Activated B cell treated with CpG ODN at 0.5 μM for 24 hours (primary cell): ENCODE measurements at regions of chr11 and their contacts with region 1.

Region 1: GRCh38 chr11:65859200-65859811 is 927 bp upstream of the MUS81 start:
- DNase-seq: peak; percentile 90
- ATAC-seq: peak; percentile 64
- H3K4me3 Mint-ChIP-seq: peak overlapping the region; percentile 99
- H3K27ac Mint-ChIP-seq: peak overlapping the region; percentile 98
- H3K4me1 Mint-ChIP-seq: peaks cover 53% of the 10 kb centered on the region
- H3K27me3 Mint-ChIP-seq: no peaks in the 10 kb centered on the region
- CTCF ChIP-seq: no peak

Region 2: GRCh38 chr11:65615229-65615941 is 243.9 kb before region 1 on chr11 and contains the start of gene PCNX3:
- CTCF ChIA-PET with region 1: interaction called, 5 read pairs
- POLR2A ChIA-PET with region 1: interaction called, 50 read pairs
- intact Hi-C with region 1: loop called (anchors 1 kb)
- DNase-seq: peak; percentile 96
- ATAC-seq: peak; percentile 90
- H3K4me3 Mint-ChIP-seq: peak within 1 kb of the TSS; percentile 97
- H3K27ac Mint-ChIP-seq: peak within 1 kb of the TSS; percentile 96
- H3K4me1 Mint-ChIP-seq: peaks cover 58% of the 10 kb centered on the region
- H3K27me3 Mint-ChIP-seq: no peaks in the 10 kb centered on the region
- CTCF ChIP-seq: no peak
- total RNA-seq, gene PCNX3: 45.3 and 51.4 TPM in 2 replicates

Region 3: DNA sequence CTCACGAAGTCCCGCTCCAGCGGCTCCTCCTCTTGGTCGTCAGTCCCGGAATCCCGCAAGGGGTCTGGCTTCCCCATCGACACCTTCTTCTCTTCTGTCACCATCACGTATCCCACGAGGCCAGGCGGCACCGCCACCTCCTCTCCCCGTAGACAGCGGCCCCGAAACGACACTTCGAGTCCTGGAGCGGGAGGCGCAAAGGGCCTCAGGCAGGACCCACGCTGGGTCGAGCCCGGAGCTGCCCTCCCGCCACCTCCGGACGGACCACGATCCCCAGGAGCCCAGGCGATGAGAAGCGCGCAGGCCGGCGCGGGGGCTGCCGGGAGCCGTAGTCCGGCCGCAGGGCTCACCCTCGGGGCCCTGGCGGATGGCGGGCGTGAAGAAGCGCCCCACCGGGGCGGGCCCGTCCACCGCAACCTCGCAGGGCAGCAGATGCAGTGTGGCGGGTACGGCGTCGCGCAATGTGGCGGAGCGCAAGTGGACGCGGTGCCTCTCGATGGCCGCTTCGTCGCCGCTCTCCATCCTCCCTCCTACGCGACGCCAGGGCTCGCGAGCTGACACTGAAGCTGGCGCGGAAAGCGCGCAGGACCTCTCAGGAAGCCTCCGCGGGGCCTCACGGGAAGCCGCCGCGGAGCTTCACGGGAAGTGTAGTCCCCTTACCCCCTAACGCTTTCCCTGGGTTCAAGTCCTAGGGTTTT is 138.9 kb before region 1 on chr11 and contains the start of gene RNASEH2C:
- CTCF ChIA-PET with region 1: no interaction called
- POLR2A ChIA-PET with region 1: interaction called, 12 read pairs
- intact Hi-C with region 1: no loop called
- DNase-seq: peak; percentile 75
- ATAC-seq: peak; percentile 92
- H3K4me3 Mint-ChIP-seq: peak within 1 kb of the TSS; percentile 94
- H3K27ac Mint-ChIP-seq: peak within 1 kb of the TSS; percentile 83
- H3K4me1 Mint-ChIP-seq: peaks cover 29% of the 10 kb centered on the region
- H3K27me3 Mint-ChIP-seq: no peaks in the 10 kb centered on the region
- CTCF ChIP-seq: no peak
- total RNA-seq, gene RNASEH2C: 85.3 and 91.4 TPM in 2 replicates

Region 4: DNA sequence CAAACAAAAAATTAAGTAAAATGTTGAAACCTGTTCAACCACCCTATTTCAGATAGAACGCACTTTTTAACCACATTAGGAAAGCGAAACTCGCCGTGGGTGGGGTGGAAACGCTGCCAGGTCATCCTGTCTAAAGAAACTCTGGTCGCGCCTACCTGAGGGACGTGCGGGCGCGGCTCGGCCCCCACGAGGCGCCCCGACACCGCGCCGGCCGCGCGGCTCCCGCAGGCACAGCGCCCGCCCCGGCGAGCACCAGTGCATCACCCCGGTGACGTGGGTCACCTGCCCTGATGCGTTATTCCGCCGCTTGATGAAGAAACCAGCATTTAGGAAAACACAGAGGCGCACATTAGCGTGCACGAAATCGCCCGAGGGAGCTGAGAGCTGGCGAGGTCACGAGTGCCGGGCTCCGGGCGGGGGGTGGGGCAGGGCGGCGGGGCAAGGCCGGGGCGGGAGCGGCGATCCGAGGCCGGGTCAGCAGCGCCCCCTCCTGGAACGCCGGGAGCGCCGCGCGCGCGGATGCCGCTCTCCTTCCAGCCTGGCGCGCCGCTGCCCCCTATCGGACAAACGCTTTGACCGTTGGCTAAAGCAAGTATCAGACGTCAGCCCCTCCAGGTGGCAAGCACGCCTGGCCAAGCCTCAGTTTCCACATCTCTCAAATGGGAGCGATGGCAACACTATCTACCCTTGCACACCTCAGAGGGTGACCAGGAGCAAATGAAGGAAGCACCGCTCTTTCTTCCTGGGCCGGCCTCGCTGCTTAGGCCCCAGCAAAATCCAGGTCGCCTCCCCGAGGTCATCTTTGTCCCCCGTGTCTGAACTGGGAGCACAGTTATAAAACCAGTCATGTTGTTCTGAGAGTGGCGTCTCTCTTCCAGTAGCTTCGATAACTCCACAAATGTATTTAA is 41.2 kb before region 1 on chr11:
- CTCF ChIA-PET with region 1: no interaction called
- POLR2A ChIA-PET with region 1: no interaction called
- intact Hi-C with region 1: no loop called
- DNase-seq: peak; percentile 95
- ATAC-seq: peak; percentile 95
- H3K4me3 Mint-ChIP-seq: peak overlapping the region; percentile 77
- H3K27ac Mint-ChIP-seq: peak overlapping the region; percentile 63
- H3K4me1 Mint-ChIP-seq: peaks cover 14% of the 10 kb centered on the region
- H3K27me3 Mint-ChIP-seq: no peaks in the 10 kb centered on the region
- CTCF ChIP-seq: peak; percentile 96

Region 5: DNA sequence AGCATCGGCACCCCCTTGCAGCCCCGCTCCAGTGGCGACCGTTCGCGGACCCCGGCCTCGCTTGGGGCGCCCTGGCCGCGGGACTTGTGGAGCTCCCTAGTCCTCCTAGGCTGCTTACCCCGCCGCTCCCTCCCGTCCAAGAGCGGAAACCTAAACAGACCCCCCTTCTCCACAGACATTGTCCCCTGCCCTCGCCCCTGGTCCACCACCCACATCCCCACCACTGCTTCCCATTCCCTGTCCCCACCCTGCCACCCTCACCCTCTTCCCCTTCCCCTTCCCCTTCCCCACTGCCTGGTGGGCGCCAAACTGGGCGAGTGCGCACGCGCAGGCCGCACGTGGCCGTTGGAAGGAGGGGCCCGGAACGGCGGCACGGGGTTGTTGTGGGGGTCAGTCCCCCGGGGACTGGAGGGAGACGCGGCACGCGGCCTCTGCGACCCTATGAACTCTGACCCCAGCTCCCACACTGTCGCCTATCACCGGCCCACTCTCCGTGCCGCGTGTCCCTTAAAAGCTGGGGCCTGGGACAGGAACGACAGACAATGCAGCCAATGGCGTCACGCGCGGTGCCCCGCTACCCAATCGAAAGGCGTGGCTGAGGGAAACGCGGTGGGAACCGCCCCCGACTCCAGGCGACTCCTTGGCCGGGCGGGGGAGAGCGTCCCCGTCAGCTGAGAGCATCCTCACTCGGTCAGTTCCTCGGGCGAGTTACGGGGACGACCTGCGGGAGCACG is 25.8 kb before region 1 on chr11 and contains the start of gene SNX32:
- CTCF ChIA-PET with region 1: interaction called, 10 read pairs
- POLR2A ChIA-PET with region 1: interaction called, 46 read pairs
- intact Hi-C with region 1: loop called (anchors 1 kb)
- DNase-seq: peak; percentile 92
- ATAC-seq: peak; percentile 99
- H3K4me3 Mint-ChIP-seq: no peak within 1 kb of the TSS
- H3K27ac Mint-ChIP-seq: no peak within 1 kb of the TSS
- H3K4me1 Mint-ChIP-seq: peaks cover 8% of the 10 kb centered on the region
- H3K27me3 Mint-ChIP-seq: no peaks in the 10 kb centered on the region
- CTCF ChIP-seq: no peak
- total RNA-seq, gene SNX32: 0.37 and 1.0 TPM in 2 replicates

Region 6: DNA sequence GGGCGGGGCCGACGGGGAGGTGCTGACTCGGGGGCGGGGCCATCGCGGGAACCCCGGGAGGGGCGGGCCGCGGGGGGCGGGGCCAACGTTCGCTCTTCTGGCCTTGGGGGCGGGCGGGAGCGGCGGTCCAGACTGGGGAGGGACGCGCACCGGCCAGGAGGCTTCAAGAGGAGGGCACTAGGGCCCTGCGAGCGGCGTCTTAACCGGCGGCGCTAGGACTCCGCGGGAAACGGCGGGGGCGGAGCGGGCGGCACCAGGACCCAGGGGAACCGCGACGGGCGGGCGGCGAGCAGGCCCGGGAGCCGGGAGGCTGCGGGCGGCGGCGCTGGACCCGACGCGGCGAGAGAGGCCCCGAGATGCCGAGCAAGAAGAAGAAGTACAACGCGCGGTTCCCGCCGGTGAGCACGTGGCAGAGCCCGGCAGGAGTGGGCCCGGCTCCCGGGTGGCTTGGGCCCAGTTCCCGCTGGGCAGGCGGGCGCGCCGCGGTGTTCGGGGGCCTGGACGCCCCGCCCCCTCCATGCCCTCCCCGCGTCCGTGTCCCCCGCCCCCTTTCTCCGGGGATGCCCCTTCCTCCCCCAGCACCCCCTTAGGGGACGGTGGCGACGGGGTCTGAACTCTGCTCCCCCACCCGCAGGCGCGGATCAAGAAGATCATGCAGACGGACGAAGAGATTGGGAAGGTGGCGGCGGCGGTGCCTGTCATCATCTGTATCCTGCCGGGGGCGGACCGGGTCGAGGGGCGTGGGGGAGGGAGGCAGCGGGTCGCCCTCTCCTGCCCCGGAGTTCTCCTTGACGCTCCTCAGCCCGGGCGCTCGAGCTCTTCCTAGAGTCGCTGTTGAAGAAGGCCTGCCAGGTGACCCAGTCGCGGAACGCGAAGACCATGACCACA is 60.1 kb after region 1 on chr11 and contains the start of gene DRAP1:
- CTCF ChIA-PET with region 1: no interaction called
- POLR2A ChIA-PET with region 1: interaction called, 13 read pairs
- intact Hi-C with region 1: loop called (anchors 1 kb)
- DNase-seq: peak; percentile 95
- ATAC-seq: peak; percentile 87
- H3K4me3 Mint-ChIP-seq: peak within 1 kb of the TSS; percentile 93
- H3K27ac Mint-ChIP-seq: peak within 1 kb of the TSS; percentile 81
- H3K4me1 Mint-ChIP-seq: peaks cover 53% of the 10 kb centered on the region
- H3K27me3 Mint-ChIP-seq: no peaks in the 10 kb centered on the region
- CTCF ChIP-seq: no peak
- total RNA-seq, gene DRAP1: 64.7 and 75.8 TPM in 2 replicates

Region 7: GRCh38 chr11:65988791-65989592 is 129.7 kb after region 1 on chr11:
- CTCF ChIA-PET with region 1: interaction called, 4 read pairs
- POLR2A ChIA-PET with region 1: interaction called, 3 read pairs
- intact Hi-C with region 1: loop called (anchors 1 kb)
- DNase-seq: peak; percentile 67
- ATAC-seq: peak; percentile 99
- H3K4me3 Mint-ChIP-seq: no peak overlapping the region
- H3K27ac Mint-ChIP-seq: peak overlapping the region; percentile 62
- H3K4me1 Mint-ChIP-seq: peaks cover 5% of the 10 kb centered on the region
- H3K27me3 Mint-ChIP-seq: no peaks in the 10 kb centered on the region
- CTCF ChIP-seq: peak; percentile 75

Region 8: GRCh38 chr11:66268283-66268951 is 409.1 kb after region 1 on chr11 and contains the start of gene RAB1B:
- CTCF ChIA-PET with region 1: no interaction called
- POLR2A ChIA-PET with region 1: interaction called, 8 read pairs
- intact Hi-C with region 1: loop called (anchors 1 kb)
- DNase-seq: peak; percentile 98
- ATAC-seq: peak; percentile 76
- H3K4me3 Mint-ChIP-seq: peak within 1 kb of the TSS; percentile 90
- H3K27ac Mint-ChIP-seq: peak within 1 kb of the TSS; percentile 97
- H3K4me1 Mint-ChIP-seq: peaks cover 32% of the 10 kb centered on the region
- H3K27me3 Mint-ChIP-seq: no peaks in the 10 kb centered on the region
- CTCF ChIP-seq: no peak
- total RNA-seq, gene RAB1B: 115 and 118 TPM in 2 replicates